Activated B cell treated with CpG ODN at 0.5 μM for 24 hours (primary cell): ENCODE measurements at regions of chr7 and their contacts with region 1.

Region 1: DNA sequence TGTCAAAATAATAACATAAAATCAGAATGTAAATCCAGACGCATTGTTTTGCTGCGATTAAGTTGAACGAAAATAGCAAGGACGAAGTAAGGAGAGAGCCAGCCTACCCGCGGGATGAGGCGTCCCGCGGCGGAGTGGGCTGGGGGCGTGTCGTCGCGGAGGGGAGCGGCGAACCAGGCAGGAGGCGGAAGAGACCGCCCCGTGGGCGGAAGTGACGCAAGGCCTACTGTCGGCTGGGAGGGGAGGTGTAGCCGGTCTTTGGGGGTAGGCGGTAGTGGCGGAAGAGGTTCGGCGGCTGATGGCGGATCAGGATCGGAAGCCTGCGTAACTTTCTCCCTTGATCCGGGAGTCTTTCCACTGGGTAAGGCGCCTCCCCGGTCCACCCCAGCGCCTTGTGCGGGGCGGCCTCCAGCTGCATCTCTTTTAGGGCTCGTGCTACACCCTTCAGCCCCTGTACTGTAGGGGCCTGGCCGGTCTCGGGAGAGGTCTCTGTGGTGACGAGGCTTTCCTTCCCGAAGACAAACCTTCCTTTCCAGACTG is at the start of gene TAX1BP1:
- DNase-seq: peak; percentile 92
- ATAC-seq: peak; percentile 93
- H3K4me3 Mint-ChIP-seq: peak within 1 kb of the TSS; percentile 95
- H3K27ac Mint-ChIP-seq: peak within 1 kb of the TSS; percentile 96
- H3K4me1 Mint-ChIP-seq: peaks cover 36% of the 10 kb centered on the region
- H3K27me3 Mint-ChIP-seq: no peaks in the 10 kb centered on the region
- CTCF ChIP-seq: no peak
- total RNA-seq, gene TAX1BP1: 61.4 and 64.7 TPM in 2 replicates

Region 2: GRCh38 chr7:26398756-26399501 is 1341.0 kb before region 1 on chr7:
- CTCF ChIA-PET with region 1: no interaction called
- POLR2A ChIA-PET with region 1: no interaction called
- intact Hi-C with region 1: loop called (anchors 1 kb)
- DNase-seq: peak; percentile 83
- ATAC-seq: peak; percentile 89
- H3K4me3 Mint-ChIP-seq: peak overlapping the region; percentile 98
- H3K27ac Mint-ChIP-seq: peak overlapping the region; percentile 98
- H3K4me1 Mint-ChIP-seq: peaks cover 36% of the 10 kb centered on the region
- H3K27me3 Mint-ChIP-seq: no peaks in the 10 kb centered on the region
- CTCF ChIP-seq: no peak

Region 3: DNA sequence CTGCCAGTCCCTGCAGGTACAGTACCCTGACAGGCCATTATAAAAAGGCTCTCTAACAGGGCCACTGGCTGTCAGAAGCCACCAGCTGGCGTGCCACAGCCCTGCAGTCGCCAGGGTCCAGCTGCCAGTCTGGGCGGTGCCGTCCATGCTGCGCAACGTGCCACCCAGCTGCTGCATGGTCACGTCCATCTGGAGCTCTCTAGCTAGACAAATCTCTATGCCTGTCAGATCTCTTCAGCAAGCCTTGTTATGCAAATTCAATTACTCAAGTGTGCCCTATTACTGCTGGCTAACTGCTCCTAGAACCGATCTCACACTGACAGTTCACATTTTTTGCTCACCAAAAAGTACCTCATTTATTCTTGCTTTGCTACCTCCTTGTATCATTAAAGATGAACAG is 153.2 kb before region 1 on chr7:
- CTCF ChIA-PET with region 1: no interaction called
- POLR2A ChIA-PET with region 1: interaction called, 4 read pairs
- intact Hi-C with region 1: loop called (anchors 1 kb)
- DNase-seq: peak; percentile 23
- ATAC-seq: peak; percentile 97
- H3K4me3 Mint-ChIP-seq: peak overlapping the region; percentile 12
- H3K27ac Mint-ChIP-seq: no peak overlapping the region
- H3K4me1 Mint-ChIP-seq: peaks cover 17% of the 10 kb centered on the region
- H3K27me3 Mint-ChIP-seq: peaks cover 12% of the 10 kb centered on the region
- CTCF ChIP-seq: no peak

Region 4: DNA sequence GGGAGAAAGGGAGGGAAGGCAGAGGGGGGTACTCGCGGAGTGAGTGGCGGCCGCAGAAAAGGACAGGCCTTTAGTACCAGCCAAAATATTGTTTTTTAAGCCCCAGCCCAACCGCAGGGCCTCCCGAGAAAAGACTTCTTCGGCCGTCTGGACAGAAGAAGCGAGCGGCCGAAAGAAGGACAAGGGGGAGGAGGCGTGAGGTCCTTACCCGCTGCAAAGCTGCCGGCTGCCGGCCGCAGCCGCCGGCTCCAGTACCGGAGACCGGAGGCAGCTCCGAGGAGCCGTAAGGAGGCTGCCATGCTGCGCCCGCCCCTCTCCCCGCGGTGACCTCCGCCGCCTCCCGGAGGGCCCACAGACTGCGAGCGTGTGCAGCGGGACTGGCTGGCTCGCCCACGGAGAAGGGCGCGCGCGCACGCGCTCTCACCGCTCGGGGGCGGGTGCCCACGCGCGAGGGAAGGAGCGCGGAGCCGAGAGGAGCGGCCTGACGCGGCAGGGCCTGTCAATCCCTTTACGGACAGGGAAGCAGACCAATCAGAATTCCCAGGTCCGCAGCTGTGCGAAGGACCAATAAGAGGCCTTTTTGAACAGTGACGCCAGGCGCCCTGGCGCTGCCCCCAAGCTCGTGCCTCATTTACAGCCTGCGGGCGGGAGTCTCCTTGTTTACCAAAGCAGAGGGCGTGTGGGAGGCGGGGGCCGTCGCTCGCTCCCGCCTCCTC is 77.3 kb before region 1 on chr7 and contains the start of gene HIBADH:
- CTCF ChIA-PET with region 1: no interaction called
- POLR2A ChIA-PET with region 1: interaction called, 27 read pairs
- intact Hi-C with region 1: loop called (anchors 1 kb)
- DNase-seq: peak; percentile 92
- ATAC-seq: peak; percentile 97
- H3K4me3 Mint-ChIP-seq: peak within 1 kb of the TSS; percentile 85
- H3K27ac Mint-ChIP-seq: peak within 1 kb of the TSS; percentile 81
- H3K4me1 Mint-ChIP-seq: peaks cover 14% of the 10 kb centered on the region
- H3K27me3 Mint-ChIP-seq: no peaks in the 10 kb centered on the region
- CTCF ChIP-seq: no peak
- total RNA-seq, gene HIBADH: 9.8 and 10.0 TPM in 2 replicates

Region 5: GRCh38 chr7:27697861-27698430 is 42.0 kb before region 1 on chr7:
- CTCF ChIA-PET with region 1: no interaction called
- POLR2A ChIA-PET with region 1: interaction called, 4 read pairs
- intact Hi-C with region 1: loop called (anchors 2 kb)
- DNase-seq: no peak
- ATAC-seq: peak; percentile 92
- H3K4me3 Mint-ChIP-seq: peak overlapping the region; percentile 15
- H3K27ac Mint-ChIP-seq: peak overlapping the region; percentile 79
- H3K4me1 Mint-ChIP-seq: peaks cover 16% of the 10 kb centered on the region
- H3K27me3 Mint-ChIP-seq: no peaks in the 10 kb centered on the region
- CTCF ChIP-seq: no peak

Region 6: GRCh38 chr7:27709137-27710075 is 30.6 kb before region 1 on chr7:
- CTCF ChIA-PET with region 1: no interaction called
- POLR2A ChIA-PET with region 1: no interaction called
- intact Hi-C with region 1: no loop called
- DNase-seq: no peak
- ATAC-seq: no peak
- H3K4me3 Mint-ChIP-seq: no peak overlapping the region
- H3K27ac Mint-ChIP-seq: no peak overlapping the region
- H3K4me1 Mint-ChIP-seq: peaks cover 5% of the 10 kb centered on the region
- H3K27me3 Mint-ChIP-seq: peaks cover 10% of the 10 kb centered on the region
- CTCF ChIP-seq: no peak

Region 7: GRCh38 chr7:28020302-28020940 is 280.4 kb after region 1 on chr7:
- CTCF ChIA-PET with region 1: no interaction called
- POLR2A ChIA-PET with region 1: no interaction called
- intact Hi-C with region 1: loop called (anchors 2 kb)
- DNase-seq: no peak
- ATAC-seq: peak; percentile 77
- H3K4me3 Mint-ChIP-seq: no peak overlapping the region
- H3K27ac Mint-ChIP-seq: no peak overlapping the region
- H3K4me1 Mint-ChIP-seq: peaks cover 9% of the 10 kb centered on the region
- H3K27me3 Mint-ChIP-seq: no peaks in the 10 kb centered on the region
- CTCF ChIP-seq: no peak